AG04449 (cell line): ENCODE measurements at regions of chr20 and their contacts with region 1.

Region 1: DNA sequence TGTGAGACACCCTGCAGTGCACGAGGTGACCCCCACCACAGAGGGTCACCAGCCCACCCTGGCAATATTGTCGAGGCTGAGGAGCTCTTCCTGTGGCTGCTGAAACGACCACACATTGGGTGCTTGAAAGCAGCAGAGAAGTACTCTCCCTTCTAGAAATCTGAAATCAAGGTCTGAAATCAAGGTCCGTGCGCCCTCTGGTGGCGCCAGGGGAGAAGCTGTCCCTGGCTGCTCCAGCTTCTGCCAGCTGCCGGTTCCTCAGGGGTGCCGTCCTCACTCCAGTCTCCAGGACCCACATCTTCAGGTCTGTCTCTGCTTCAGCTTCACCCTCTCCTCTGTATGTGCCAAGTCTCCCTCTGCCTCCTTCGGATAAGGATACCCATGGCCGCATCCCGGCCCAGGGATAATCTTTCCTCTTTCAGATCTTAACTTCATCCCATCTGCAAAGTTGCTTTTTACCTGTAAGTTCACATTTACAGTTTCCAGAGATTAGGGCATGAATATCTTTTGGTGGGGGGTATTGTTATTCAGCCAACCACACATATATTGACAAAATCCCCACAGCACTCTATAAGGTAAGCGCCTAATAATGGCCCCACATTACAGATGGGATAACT is 108.3 kb upstream of the PHACTR3 start:
- DNase-seq: no peak
- H3K4me3 ChIP-seq: no peak overlapping the region
- CTCF ChIP-seq: peak; percentile 93

Region 2: DNA sequence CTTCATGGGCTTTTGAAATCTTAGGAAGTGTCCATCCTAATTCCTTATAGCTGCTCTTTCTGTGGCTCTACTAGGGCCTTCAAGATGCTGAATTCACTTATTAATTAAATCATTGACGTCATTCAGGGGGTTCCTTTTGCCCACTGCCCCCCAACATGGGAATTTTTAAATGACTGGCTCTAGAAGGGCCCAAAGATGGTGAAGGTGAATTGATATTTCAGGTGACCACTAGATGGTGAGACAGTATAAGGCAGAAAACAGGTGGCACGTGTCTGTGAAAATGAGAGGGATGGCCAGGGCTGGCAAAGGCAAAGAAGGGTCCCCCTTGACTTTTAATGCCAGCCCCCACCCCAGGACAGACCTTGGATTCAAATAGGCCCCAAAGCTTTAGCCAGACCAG is 631.7 kb before region 1 on chr20:
- CTCF ChIA-PET with region 1: interaction called, 28 read pairs
- POLR2A ChIA-PET with region 1: no interaction called
- DNase-seq: no peak
- H3K4me3 ChIP-seq: no peak overlapping the region
- CTCF ChIP-seq: no peak

Region 3: GRCh38 chr20:59222253-59223181 is 273.5 kb before region 1 on chr20:
- CTCF ChIA-PET with region 1: interaction called, 11 read pairs
- POLR2A ChIA-PET with region 1: no interaction called
- DNase-seq: peak; percentile 12
- H3K4me3 ChIP-seq: peak overlapping the region; percentile 48
- CTCF ChIP-seq: peak; percentile 94

Region 4: DNA sequence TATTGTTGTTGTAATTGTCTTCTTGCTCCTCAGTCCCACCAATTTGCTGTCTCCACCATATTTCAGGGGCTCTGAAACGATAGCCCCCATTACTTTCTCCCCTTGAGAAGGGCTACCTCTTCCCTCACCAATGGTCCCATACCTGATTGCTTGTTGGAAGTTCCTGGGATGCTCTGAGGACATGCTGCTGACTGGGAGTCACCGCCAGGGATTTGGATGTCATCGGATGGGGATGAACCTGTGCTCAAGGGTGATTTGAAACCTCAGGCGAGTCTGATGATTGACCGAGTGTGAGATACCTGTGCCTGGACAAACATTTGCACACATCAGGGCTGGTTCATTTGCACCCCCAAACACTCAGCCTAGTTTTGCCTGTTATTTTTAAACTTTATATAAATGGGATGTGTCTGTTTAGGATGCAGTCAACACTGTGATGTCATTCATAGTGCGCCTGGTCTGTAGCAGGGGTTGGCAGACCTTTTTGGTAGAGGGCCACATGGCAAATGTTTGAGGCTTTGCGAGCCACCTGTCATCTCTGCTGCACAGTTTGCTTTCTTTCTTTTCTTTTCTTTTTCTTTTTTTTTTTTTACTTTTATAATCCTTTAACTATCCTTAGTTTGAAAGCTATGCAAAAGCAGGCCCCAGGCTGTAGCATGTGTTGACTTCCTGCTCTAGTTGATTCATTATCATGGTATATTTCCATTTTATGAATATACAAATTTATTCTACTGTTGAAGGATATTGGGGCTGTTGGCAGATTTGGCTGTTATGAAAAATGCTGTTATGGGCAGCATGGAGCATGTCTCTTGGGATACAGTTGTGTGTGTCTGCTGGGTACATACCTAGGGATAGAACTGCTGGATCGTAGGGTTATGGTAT is 10.2 kb before region 1 on chr20:
- CTCF ChIA-PET with region 1: interaction called, 16 read pairs
- POLR2A ChIA-PET with region 1: no interaction called
- DNase-seq: no peak
- H3K4me3 ChIP-seq: no peak overlapping the region
- CTCF ChIP-seq: no peak

Region 5: GRCh38 chr20:59515014-59515905 is 19.3 kb after region 1 on chr20:
- CTCF ChIA-PET with region 1: interaction called, 17 read pairs
- POLR2A ChIA-PET with region 1: no interaction called
- DNase-seq: no peak
- H3K4me3 ChIP-seq: no peak overlapping the region
- CTCF ChIP-seq: peak; percentile 86